ENCODE measurements at regions of chr9 and their contacts with region 1.

Region 1: GRCh38 chr9:104494808-104495207 is 9.3 kb upstream of the OR13F1 start:
- DNase-seq: no peak
- ATAC-seq: peak; percentile 45; the same call in 2 of the 3 replicates
- H3K4me3 ChIP-seq: no peak overlapping the region
- H3K27ac ChIP-seq: no peak overlapping the region
- H3K4me1 ChIP-seq: no peaks in the 10 kb centered on the region
- H3K27me3 ChIP-seq: no peaks in the 10 kb centered on the region; a peak in 1 of 4 replicates
- CTCF ChIP-seq: peak; percentile 5 to 31 (median 6); a peak in 1 of 6 replicates
- EP300 ChIP-seq: no peak
- POLR2A ChIP-seq: no peak
- RAD21 ChIP-seq: peak; percentile 46

Region 2: GRCh38 chr9:104177003-104177611 is 317.7 kb before region 1 on chr9:
- CTCF ChIA-PET with region 1: interaction called, 25 read pairs
- POLR2A ChIA-PET with region 1: no interaction called
- RAD21 ChIA-PET with region 1: no interaction called
- SMC1A ChIA-PET with region 1: interaction called, 15 read pairs
- in situ Hi-C with region 1: no loop called
- intact Hi-C with region 1: loop called (anchors 2 kb)
- DNase-seq: no peak
- ATAC-seq: peak; percentile 87
- H3K4me3 ChIP-seq: no peak overlapping the region
- H3K27ac ChIP-seq: no peak overlapping the region
- H3K4me1 ChIP-seq: 0 out of 2 replicates have a peak, but pooled peaks cover 2% of the 10 kb centered on the region
- H3K27me3 ChIP-seq: no peaks in the 10 kb centered on the region
- CTCF ChIP-seq: peak; percentile 36 to 51 (median 41); a peak in 4 of 6 replicates
- EP300 ChIP-seq: no peak
- POLR2A ChIP-seq: no peak
- RAD21 ChIP-seq: peak; percentile 51

Region 3: GRCh38 chr9:104269996-104270963 is 224.5 kb before region 1 on chr9:
- CTCF ChIA-PET with region 1: no interaction called
- POLR2A ChIA-PET with region 1: no interaction called
- RAD21 ChIA-PET with region 1: no interaction called
- SMC1A ChIA-PET with region 1: no interaction called
- in situ Hi-C with region 1: no loop called
- intact Hi-C with region 1: no loop called
- DNase-seq: no peak
- ATAC-seq: no peak
- H3K4me3 ChIP-seq: no peak overlapping the region
- H3K27ac ChIP-seq: no peak overlapping the region
- H3K4me1 ChIP-seq: no peaks in the 10 kb centered on the region
- H3K27me3 ChIP-seq: no peaks in the 10 kb centered on the region
- CTCF ChIP-seq: no peak
- EP300 ChIP-seq: no peak
- POLR2A ChIP-seq: no peak
- RAD21 ChIP-seq: no peak

Region 4: DNA sequence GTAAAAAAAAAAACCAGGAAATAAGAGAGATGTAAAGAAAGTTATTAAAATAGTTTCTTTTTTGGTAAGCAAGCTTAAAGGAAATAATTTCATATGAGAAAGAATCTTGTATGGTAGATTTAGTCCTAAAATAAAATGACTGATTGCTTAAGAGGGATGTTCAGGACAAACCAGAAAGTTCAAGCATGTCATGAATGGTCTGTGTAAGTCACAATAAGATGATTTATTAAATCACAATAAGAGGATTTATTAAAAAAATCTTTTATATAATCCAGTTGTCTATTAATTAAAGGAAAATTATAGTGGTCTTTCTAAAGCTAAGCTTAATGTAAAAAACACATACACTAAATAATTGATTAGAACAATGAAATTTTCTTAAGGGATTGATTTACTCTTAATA is 82.6 kb before region 1 on chr9:
- CTCF ChIA-PET with region 1: no interaction called
- POLR2A ChIA-PET with region 1: no interaction called
- RAD21 ChIA-PET with region 1: no interaction called
- SMC1A ChIA-PET with region 1: no interaction called
- in situ Hi-C with region 1: no loop called
- intact Hi-C with region 1: no loop called
- DNase-seq: no peak
- ATAC-seq: no peak
- H3K4me3 ChIP-seq: no peak overlapping the region
- H3K27ac ChIP-seq: no peak overlapping the region
- H3K4me1 ChIP-seq: no peaks in the 10 kb centered on the region
- H3K27me3 ChIP-seq: no peaks in the 10 kb centered on the region
- CTCF ChIP-seq: no peak
- EP300 ChIP-seq: no peak
- POLR2A ChIP-seq: no peak
- RAD21 ChIP-seq: no peak

Region 5: DNA sequence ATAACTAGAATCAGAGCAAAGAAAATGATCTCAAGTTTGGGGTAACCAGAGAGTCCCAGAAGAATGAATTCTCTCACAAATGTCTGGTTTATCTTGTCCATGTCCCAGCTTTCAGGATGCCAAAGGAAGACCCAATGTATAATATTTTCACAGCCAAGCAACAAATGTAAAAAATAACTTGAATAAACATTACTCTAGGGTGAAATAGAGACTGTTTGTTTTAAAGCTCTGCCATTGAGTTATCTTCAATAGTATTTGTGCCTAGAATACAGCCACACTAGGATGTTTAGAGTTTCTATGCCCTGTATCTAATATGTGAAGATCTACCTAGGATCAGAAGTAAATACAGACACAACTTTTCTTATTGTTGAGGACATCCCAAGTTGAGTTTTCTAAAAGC is 32.3 kb after region 1 on chr9 and contains the start of gene OR13C4:
- CTCF ChIA-PET with region 1: no interaction called
- POLR2A ChIA-PET with region 1: no interaction called
- RAD21 ChIA-PET with region 1: no interaction called
- SMC1A ChIA-PET with region 1: no interaction called
- in situ Hi-C with region 1: no loop called
- intact Hi-C with region 1: no loop called
- DNase-seq: no peak
- ATAC-seq: no peak
- H3K4me3 ChIP-seq: no peak within 1 kb of the TSS
- H3K27ac ChIP-seq: no peak within 1 kb of the TSS
- H3K4me1 ChIP-seq: no peaks in the 10 kb centered on the region
- H3K27me3 ChIP-seq: no peaks in the 10 kb centered on the region
- CTCF ChIP-seq: no peak
- EP300 ChIP-seq: no peak
- POLR2A ChIP-seq: no peak
- RAD21 ChIP-seq: no peak
- polyA plus RNA-seq, gene OR13C4: not detected